ENCODE measurements at regions of chr19 and their contacts with region 1.

Region 1: DNA sequence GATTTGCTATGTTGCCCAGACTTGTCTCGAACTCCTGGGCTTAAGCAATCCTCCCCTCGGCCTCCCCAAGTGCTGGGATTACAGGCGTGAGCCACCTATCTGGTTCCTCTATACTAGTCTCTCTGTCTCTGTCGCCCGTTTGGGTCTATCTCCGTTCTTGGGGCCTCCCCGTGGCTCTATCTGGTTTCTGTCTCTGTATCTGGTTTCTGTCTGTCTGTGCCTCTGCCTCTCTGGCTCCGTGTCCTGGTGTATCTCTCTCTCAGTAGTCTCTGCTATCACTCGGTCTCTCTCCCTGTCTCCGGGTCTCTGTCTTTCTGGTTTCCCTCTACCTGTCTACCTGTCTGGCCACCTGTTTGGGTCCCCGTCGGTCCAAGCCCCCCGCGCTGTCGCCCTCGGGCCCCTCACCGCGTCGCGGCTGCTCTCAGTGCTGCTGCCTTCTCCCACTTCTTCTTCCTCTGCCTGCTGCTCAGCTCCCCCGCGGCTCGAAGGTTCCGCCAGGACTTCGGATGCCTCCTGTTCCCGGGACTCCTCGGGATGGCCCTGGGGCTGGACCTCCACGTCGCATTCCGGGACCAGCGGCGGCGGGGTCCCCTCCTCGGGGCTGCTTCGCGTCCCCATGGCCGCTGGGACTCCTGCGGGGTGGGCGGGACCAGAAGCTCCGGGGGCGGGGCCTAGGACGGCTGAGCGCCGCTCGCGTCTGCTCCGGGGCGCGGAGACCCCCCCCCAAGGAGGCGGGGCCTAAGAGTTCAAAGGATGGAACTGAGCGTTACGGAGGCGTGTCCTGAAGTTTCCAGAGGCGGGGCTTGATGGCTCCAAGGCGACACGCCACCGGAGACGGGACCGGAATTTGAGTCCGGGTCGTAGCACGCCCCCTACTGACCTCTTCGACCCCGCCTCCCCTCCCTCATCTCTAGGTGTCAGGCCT is 783 bp downstream of the PHLDB3 start:
- DNase-seq: peak; percentile 90
- ATAC-seq: peak; percentile 86
- H3K4me3 ChIP-seq: peak overlapping the region; percentile 86 to 97 (median 95)
- H3K27ac ChIP-seq: peak overlapping the region; percentile 79
- H3K4me1 ChIP-seq: peaks cover 51% of the 10 kb centered on the region
- H3K27me3 ChIP-seq: no peaks in the 10 kb centered on the region; a peak in 1 of 5 replicates
- CTCF ChIP-seq: peak; percentile 82
- EP300 ChIP-seq: no peak
- POLR2A ChIP-seq: peak; percentile 46 to 73; a peak in 3 of 4 replicates
- RAD21 ChIP-seq: peak; percentile 29; the same call in 1 of the 2 replicates

Region 2: DNA sequence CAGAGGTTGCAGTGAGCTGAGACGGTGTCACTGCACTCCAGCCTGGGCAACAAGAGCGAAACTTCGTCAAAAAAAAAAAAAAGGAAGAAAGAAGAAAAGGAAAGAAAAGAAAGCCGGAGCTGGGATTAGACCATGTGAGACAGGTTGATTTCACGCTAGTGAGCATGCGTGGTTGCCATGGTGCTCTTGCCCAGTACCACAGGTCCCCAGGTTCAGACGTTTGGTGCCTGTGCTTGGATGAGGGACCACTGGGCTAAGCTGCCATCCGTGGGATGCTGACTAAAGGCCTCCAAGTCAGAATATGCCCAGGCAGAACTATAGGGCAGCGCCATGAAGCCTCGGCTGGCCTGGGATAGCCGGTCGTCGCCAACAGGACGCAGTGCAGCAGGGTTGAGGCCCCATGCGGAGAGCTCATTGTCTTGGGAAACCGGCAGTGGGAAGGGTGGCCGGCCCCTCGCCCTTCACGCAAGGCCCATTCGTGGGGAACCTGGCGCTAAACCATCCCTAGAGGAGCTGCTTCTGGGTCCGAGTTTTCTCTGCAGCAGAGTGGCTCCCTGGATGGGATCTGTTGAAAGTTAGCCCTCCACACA is 96.3 kb before region 1 on chr19:
- CTCF ChIA-PET with region 1: no interaction called
- POLR2A ChIA-PET with region 1: no interaction called
- in situ Hi-C with region 1: no loop called
- intact Hi-C with region 1: no loop called
- DNase-seq: no peak
- ATAC-seq: no peak
- H3K4me3 ChIP-seq: no peak overlapping the region
- H3K27ac ChIP-seq: no peak overlapping the region
- H3K4me1 ChIP-seq: no peaks in the 10 kb centered on the region
- H3K27me3 ChIP-seq: no peaks in the 10 kb centered on the region
- CTCF ChIP-seq: no peak
- EP300 ChIP-seq: no peak
- POLR2A ChIP-seq: no peak
- RAD21 ChIP-seq: no peak

Region 3: GRCh38 chr19:43446746-43447489 is 56.8 kb before region 1 on chr19:
- CTCF ChIA-PET with region 1: interaction called, 10 read pairs
- POLR2A ChIA-PET with region 1: interaction called, 9 read pairs
- in situ Hi-C with region 1: no loop called
- intact Hi-C with region 1: loop called (anchors 1 kb)
- DNase-seq: peak; percentile 65
- ATAC-seq: peak; percentile 89
- H3K4me3 ChIP-seq: no peak overlapping the region
- H3K27ac ChIP-seq: no peak overlapping the region
- H3K4me1 ChIP-seq: peaks cover 9% of the 10 kb centered on the region; the same call in 1 of the 2 replicates
- H3K27me3 ChIP-seq: 0 out of 5 replicates have a peak, but pooled peaks cover 0 to 1% of the 10 kb centered on the region in 2 experiments
- CTCF ChIP-seq: peak; percentile 95
- EP300 ChIP-seq: no peak
- POLR2A ChIP-seq: no peak
- RAD21 ChIP-seq: peak; percentile 93

Region 4: GRCh38 chr19:43463381-43464136 is 40.2 kb before region 1 on chr19:
- CTCF ChIA-PET with region 1: no interaction called
- POLR2A ChIA-PET with region 1: interaction called, 47 read pairs
- in situ Hi-C with region 1: no loop called
- intact Hi-C with region 1: loop called (anchors 2 kb)
- DNase-seq: peak; percentile 85
- ATAC-seq: peak; percentile 87
- H3K4me3 ChIP-seq: peak overlapping the region; percentile 70 to 84 (median 73)
- H3K27ac ChIP-seq: peak overlapping the region; percentile 64
- H3K4me1 ChIP-seq: peaks cover 52% of the 10 kb centered on the region
- H3K27me3 ChIP-seq: no peaks in the 10 kb centered on the region
- CTCF ChIP-seq: no peak
- EP300 ChIP-seq: no peak
- POLR2A ChIP-seq: peak in 1 of 2 experiments; percentile 47; a peak in 2 of 4 replicates
- RAD21 ChIP-seq: 0 out of 2 replicates have a peak, but pooled peaks have one; percentile 17

Region 5: DNA sequence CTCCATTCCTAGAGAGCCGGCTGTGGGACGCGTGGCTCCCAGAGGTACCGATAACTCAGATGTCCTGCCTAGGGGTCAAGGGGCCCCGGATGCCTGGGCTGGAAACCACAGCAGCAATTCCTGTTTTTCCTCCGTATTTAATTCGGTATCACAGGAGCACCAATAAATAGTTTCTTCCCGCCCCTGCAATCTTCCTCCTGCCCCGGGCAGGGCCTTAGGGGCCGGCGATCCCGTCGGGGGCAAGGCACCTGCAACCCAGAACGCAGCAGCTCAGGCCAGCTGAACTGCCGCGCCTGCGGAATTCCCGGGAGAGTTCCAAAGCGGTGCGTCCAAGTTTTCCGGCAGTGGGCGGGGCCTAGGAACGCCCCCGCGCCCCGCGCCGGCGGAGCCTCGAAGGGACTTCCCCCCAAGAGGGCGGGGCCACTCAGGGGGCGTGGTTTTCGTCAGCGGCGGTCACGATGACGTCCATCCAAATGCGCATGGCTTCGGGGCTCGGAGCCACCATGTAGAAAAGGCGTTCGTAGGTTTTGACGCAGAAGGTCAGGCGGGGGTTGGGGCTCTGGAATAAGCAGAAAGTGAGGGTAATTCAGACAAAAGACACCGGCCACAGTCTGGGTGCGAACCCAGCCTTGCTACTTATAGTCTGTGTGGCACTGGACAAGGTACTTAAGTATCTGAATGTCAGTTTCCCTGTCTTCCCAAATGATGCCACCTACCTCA is 28.6 kb before region 1 on chr19:
- CTCF ChIA-PET with region 1: no interaction called
- POLR2A ChIA-PET with region 1: interaction called, 10 read pairs
- in situ Hi-C with region 1: no loop called
- intact Hi-C with region 1: no loop called
- DNase-seq: no peak
- ATAC-seq: no peak
- H3K4me3 ChIP-seq: no peak overlapping the region
- H3K27ac ChIP-seq: no peak overlapping the region
- H3K4me1 ChIP-seq: no peaks in the 10 kb centered on the region
- H3K27me3 ChIP-seq: no peaks in the 10 kb centered on the region
- CTCF ChIP-seq: no peak
- EP300 ChIP-seq: no peak
- POLR2A ChIP-seq: no peak
- RAD21 ChIP-seq: no peak

Region 6: DNA sequence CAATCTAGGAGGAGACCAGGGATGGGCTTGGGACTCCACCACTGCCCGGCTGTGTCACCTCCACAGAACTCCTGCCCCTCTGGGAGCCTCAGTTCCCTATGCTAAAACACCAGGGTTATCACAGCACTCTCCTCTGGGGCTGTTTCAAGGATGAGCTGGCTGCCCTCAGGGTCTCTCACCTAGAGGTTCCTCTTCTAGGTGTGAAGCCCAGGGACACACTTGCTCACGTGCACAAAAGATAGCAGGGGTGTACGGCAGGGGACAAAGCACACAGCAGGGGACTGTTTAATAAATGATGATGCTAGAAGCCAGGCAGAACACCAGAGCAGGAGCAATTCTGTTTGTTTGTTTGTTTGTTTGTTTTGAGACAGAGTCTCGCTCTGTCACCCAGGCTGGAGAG is 21.6 kb before region 1 on chr19:
- CTCF ChIA-PET with region 1: no interaction called
- POLR2A ChIA-PET with region 1: interaction called, 11 read pairs
- in situ Hi-C with region 1: no loop called
- intact Hi-C with region 1: no loop called
- DNase-seq: no peak
- ATAC-seq: no peak
- H3K4me3 ChIP-seq: no peak overlapping the region
- H3K27ac ChIP-seq: no peak overlapping the region
- H3K4me1 ChIP-seq: no peaks in the 10 kb centered on the region
- H3K27me3 ChIP-seq: no peaks in the 10 kb centered on the region
- CTCF ChIP-seq: no peak
- EP300 ChIP-seq: no peak
- POLR2A ChIP-seq: no peak
- RAD21 ChIP-seq: no peak

Region 7: DNA sequence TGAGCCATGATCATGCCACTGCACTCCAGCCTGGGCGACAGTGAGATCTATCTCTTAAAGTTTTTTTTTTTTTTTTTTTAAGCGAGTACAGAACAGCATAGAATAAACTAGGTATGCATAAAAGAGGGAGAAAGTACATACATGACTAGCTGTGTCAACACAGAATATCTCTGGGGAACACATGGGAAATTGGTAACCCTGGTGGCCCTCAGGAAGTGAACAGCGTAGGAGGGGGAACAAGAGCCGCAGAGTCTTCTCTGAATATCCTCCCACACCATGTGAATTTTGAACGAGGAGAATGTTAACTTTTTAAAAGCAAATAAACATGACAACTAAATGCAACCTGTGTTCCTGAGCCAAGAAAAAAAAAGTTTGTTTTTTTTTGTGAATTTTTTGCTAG is 14.5 kb before region 1 on chr19:
- CTCF ChIA-PET with region 1: no interaction called
- POLR2A ChIA-PET with region 1: interaction called, 13 read pairs
- in situ Hi-C with region 1: no loop called
- intact Hi-C with region 1: no loop called
- DNase-seq: no peak
- ATAC-seq: no peak
- H3K4me3 ChIP-seq: no peak overlapping the region
- H3K27ac ChIP-seq: no peak overlapping the region
- H3K4me1 ChIP-seq: no peaks in the 10 kb centered on the region
- H3K27me3 ChIP-seq: no peaks in the 10 kb centered on the region
- CTCF ChIP-seq: no peak
- EP300 ChIP-seq: no peak
- POLR2A ChIP-seq: no peak
- RAD21 ChIP-seq: no peak

Region 8: DNA sequence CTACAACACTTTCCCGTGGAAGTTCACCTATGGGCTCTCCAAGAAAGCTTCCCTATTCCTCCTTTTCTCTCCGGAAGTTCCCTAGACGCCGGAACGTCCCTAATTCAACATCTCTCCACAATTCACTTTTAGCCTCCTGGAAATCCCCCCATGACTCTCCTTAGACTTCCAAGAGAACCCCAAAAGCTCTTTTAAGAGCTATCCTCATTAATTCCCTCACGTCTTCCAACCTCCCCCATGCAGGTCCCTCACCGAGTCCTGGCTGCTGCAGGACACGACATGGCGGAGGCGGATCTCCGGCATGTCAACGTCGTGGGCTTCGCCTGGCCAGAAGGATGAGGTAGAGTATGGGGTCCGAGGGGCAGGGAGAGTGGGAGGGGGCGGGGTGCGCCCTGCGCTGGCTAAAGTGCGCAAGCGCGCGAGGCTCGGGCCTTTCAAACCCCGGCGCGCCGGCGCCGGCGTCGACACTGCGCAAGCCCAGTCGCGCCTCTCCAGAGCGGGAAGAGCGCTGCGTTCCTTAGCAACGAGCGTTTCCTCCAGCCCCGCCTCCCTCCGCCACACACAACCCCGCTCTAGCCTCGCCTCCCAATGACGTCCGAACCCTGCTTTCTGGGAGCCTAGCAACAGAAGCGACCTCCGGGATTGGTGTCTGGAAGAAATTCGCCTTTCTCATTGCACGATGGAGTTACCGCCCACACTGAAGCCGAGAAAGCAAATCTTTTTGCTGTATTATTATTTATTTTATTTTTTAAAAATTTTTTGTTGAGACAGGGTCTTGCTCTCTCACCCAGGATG is 71.6 kb after region 1 on chr19 and contains the starts of genes PINLYP and XRCC1:
- CTCF ChIA-PET with region 1: no interaction called
- POLR2A ChIA-PET with region 1: no interaction called
- in situ Hi-C with region 1: no loop called
- intact Hi-C with region 1: no loop called
- DNase-seq: peak; percentile 96
- ATAC-seq: peak; percentile 97
- H3K4me3 ChIP-seq: peak within 1 kb of the TSS; percentile 87 to 92 (median 89)
- H3K27ac ChIP-seq: peak within 1 kb of the TSS; percentile 72
- H3K4me1 ChIP-seq: peaks cover 19% of the 10 kb centered on the region; the same call in 1 of the 2 replicates
- H3K27me3 ChIP-seq: no peaks in the 10 kb centered on the region; a peak in 1 of 5 replicates
- CTCF ChIP-seq: no peak
- EP300 ChIP-seq: 0 out of 4 replicates have a peak, but pooled peaks of 1 of the 2 experiments have one; percentile 17
- POLR2A ChIP-seq: peak; percentile 60 to 67
- RAD21 ChIP-seq: no peak
- total RNA-seq, gene PINLYP: 0.24 TPM in 1 of 2 replicates, not detected in the other
- total RNA-seq, gene XRCC1: 21.8 and 26.3 TPM in 2 replicates

Measured in HepG2 (cell line).